PC-9 (cell line): ENCODE measurements at regions of chr16 and their contacts with region 1.

Region 1: GRCh38 chr16:87240220-87241107 is 76.7 kb downstream of the C16orf95 start:
- DNase-seq: peak; percentile 25 to 92
- H3K4me3 ChIP-seq: peak overlapping the region; percentile 32
- H3K27ac ChIP-seq: peak overlapping the region; percentile 91
- H3K4me1 ChIP-seq: peaks cover 47% of the 10 kb centered on the region
- H3K27me3 ChIP-seq: no peaks in the 10 kb centered on the region
- CTCF ChIP-seq: no peak

Region 2: DNA sequence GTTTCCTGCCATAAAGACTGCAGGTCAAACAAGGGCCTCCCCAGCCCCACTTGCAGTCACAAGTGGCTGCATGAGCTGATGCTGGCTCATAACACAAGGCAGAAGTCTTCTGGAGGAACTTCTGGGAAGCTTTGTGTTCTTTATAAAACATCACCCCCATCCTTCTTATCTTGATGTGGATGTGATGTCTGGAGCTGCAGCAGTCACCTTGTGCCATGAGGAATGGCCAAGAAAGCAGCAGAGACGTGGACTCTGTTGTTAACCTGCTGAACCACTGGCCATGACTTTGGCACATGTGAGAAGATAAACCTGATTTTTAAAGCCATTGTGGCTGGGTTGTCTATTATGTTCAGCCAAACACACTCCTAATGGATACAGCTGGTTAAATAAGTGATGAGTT is 620.3 kb before region 1 on chr16:
- CTCF ChIA-PET with region 1: no interaction called
- POLR2A ChIA-PET with region 1: interaction called, 14 read pairs
- intact Hi-C with region 1: no loop called
- DNase-seq: no peak
- H3K4me3 ChIP-seq: no peak overlapping the region
- H3K27ac ChIP-seq: no peak overlapping the region
- H3K4me1 ChIP-seq: no peaks in the 10 kb centered on the region
- H3K27me3 ChIP-seq: peaks cover 96% of the 10 kb centered on the region
- CTCF ChIP-seq: no peak

Region 3: GRCh38 chr16:87203060-87203656 is 37.3 kb before region 1 on chr16:
- CTCF ChIA-PET with region 1: no interaction called
- POLR2A ChIA-PET with region 1: interaction called, 5 read pairs
- intact Hi-C with region 1: loop called (anchors 5 kb)
- DNase-seq: peak; percentile 51 to 67
- H3K4me3 ChIP-seq: no peak overlapping the region
- H3K27ac ChIP-seq: 0 out of 2 replicates have a peak overlapping the region, but pooled peaks have one; percentile 12
- H3K4me1 ChIP-seq: peaks cover 67% of the 10 kb centered on the region
- H3K27me3 ChIP-seq: no peaks in the 10 kb centered on the region
- CTCF ChIP-seq: peak; percentile 93

Region 4: DNA sequence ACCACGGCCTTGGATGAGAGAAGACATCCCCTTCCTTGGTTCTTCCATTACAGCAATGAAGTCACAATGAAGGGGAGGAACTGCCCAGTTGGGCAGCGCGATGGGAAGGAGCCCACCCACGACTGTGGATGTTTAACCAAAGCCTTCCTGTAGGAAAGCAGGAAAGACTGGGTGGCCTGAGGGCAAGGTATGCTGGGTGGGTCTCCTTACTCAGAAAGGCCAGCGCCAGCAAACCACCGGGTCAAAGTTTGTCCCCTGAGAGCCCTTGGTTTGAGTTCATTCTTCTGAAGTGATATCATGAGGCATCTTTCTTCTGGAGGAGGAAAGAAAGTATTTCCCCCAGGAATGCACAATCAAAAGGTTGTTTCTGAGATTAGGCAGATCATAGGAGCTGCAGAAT is 28.4 kb before region 1 on chr16:
- CTCF ChIA-PET with region 1: no interaction called
- POLR2A ChIA-PET with region 1: no interaction called
- intact Hi-C with region 1: loop called (anchors 2 kb)
- DNase-seq: peak; percentile 40 to 72
- H3K4me3 ChIP-seq: no peak overlapping the region
- H3K27ac ChIP-seq: peak overlapping the region; percentile 42
- H3K4me1 ChIP-seq: peaks cover 38% of the 10 kb centered on the region
- H3K27me3 ChIP-seq: no peaks in the 10 kb centered on the region
- CTCF ChIP-seq: no peak